Endothelial cell of umbilical vein (primary cell): ENCODE measurements at regions of chr12 and their contacts with region 1.

Region 1: DNA sequence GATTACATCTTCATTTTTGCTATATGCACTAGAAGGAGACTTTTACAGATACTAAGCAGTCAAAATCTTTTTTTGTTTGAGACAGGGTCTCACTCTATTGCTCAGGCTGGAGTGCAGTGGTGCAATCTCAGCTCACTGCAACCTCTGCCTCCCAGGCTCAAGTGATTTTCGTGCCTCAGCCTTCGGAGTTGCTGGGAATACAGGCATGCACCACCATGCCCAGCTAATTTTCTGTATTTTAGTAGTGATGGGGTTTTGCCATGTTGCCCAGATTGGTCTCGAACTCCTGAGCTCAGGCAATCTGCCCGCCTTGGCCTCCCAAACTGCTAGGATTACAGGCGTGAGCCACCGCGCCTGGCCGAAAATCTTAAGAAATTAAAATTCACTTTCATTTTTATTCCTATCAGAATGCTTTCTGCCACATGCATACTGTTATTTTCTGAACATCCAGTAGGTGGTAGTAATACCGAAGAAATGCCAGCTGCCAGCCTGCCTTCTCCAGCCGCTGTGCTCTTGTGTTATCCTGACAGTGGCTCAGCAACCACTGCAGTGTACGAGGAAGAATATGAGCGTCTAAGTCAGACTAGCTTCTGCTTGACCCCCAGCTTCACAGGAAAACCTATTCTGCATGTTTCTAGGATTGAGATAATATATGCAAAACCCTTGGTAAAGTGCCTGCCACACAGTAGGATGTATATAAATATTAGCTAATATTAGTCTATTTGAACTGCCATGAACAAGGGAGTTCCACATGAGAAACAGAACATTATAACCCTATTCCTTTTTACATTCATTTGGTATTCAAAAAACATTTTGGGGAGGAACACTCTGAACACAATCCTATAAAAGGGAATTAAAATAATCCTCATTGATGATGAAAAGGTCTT is 54.2 kb downstream of the RPAP3 start:
- DNase-seq: peak; percentile 66
- H3K4me3 ChIP-seq: no peak overlapping the region
- H3K27ac ChIP-seq: no peak overlapping the region
- H3K4me1 ChIP-seq: no peaks in the 10 kb centered on the region
- H3K27me3 ChIP-seq: no peaks in the 10 kb centered on the region
- CTCF ChIP-seq: peak; percentile 39 to 50
- POLR2A ChIP-seq: no peak

Region 2: GRCh38 chr12:47636908-47637780 is 14.5 kb before region 1 on chr12:
- CTCF ChIA-PET with region 1: interaction called, 19 read pairs
- POLR2A ChIA-PET with region 1: no interaction called
- dilution Hi-C with region 1: no loop called
- intact Hi-C with region 1: no loop called
- DNase-seq: no peak
- H3K4me3 ChIP-seq: no peak overlapping the region
- H3K27ac ChIP-seq: no peak overlapping the region
- H3K4me1 ChIP-seq: no peaks in the 10 kb centered on the region
- H3K27me3 ChIP-seq: no peaks in the 10 kb centered on the region
- CTCF ChIP-seq: peak; percentile 60 to 68
- POLR2A ChIP-seq: no peak

Region 3: DNA sequence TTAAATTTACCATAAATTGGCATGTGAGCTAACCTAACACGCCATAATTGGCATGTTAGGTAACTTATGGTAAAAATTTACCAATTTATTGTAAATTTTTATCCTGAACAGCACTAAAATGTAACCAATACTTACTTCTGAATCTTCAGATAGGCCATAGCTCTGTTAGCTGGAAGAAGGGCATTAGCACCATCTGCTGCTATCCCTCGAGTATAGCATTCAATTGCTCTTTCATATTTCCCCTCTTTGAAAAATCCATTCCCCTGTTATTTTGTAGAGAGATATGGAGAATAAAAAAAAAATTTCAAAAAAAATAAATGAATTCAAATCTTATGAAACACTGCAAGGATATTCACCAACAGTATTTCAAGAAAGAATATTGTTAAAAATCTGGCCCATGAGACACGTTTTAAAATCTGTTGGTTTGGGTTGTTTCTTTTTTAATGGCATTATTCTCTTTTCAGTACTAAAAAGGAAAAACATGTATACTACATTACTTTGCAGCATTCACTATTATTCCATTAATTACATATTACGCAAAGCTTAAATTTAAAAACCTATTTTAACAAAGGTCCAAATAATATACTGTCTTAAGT is 35.1 kb after region 1 on chr12:
- CTCF ChIA-PET with region 1: interaction called, 54 read pairs
- POLR2A ChIA-PET with region 1: no interaction called
- dilution Hi-C with region 1: no loop called
- intact Hi-C with region 1: loop called (anchors 1 kb)
- DNase-seq: peak; percentile 54
- H3K4me3 ChIP-seq: no peak overlapping the region
- H3K27ac ChIP-seq: no peak overlapping the region
- H3K4me1 ChIP-seq: no peaks in the 10 kb centered on the region
- H3K27me3 ChIP-seq: no peaks in the 10 kb centered on the region
- CTCF ChIP-seq: peak; percentile 20 to 61
- POLR2A ChIP-seq: no peak

Region 4: DNA sequence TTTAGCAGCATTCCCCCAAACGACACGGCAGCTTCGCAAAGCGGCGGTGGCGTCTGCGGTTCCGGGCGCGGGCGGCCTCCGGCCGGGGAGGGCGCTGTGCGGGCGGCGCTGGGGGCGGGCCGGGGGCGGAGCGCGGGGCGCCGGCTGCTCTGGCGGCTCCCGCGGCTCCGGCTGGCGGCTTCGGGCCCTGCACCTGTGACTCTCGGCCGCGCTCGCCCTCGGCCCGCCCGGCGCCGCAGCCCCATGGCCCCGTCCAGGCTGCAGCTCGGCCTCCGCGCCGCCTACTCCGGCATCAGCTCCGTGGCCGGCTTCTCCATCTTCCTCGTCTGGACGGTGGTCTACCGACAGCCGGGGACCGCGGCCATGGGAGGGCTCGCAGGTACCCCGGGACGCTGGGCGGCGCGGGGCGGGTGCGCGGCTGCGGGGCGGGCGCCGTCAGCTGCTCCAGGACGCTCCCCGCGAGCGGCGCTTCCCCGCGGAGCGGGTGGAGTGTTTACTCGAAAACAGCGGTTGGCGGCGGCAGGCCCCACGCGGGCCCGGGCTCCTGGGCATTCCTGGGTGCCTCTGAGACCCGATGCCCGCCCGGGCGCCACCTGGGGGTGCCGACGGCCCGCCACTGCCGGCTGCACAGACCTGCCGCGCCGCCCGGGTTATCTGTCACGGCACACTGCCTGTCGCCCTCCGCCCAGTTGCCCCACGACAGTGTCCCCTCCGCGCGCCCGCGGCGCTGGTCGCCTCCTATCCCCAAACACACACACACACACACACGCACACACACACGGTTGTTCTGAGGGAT is 121.6 kb after region 1 on chr12 and contains the start of gene SLC48A1:
- CTCF ChIA-PET with region 1: interaction called, 6 read pairs
- POLR2A ChIA-PET with region 1: no interaction called
- dilution Hi-C with region 1: no loop called
- intact Hi-C with region 1: loop called (anchors 2 kb)
- DNase-seq: peak; percentile 54
- H3K4me3 ChIP-seq: peak within 1 kb of the TSS; percentile 43 to 70 (median 57)
- H3K27ac ChIP-seq: no peak within 1 kb of the TSS
- H3K4me1 ChIP-seq: peaks cover 34% of the 10 kb centered on the region
- H3K27me3 ChIP-seq: no peaks in the 10 kb centered on the region
- CTCF ChIP-seq: peak; percentile 13 to 38
- POLR2A ChIP-seq: peak; percentile 53
- total RNA-seq, gene SLC48A1: 17.9 and 20.3 TPM in 2 replicates

Region 5: DNA sequence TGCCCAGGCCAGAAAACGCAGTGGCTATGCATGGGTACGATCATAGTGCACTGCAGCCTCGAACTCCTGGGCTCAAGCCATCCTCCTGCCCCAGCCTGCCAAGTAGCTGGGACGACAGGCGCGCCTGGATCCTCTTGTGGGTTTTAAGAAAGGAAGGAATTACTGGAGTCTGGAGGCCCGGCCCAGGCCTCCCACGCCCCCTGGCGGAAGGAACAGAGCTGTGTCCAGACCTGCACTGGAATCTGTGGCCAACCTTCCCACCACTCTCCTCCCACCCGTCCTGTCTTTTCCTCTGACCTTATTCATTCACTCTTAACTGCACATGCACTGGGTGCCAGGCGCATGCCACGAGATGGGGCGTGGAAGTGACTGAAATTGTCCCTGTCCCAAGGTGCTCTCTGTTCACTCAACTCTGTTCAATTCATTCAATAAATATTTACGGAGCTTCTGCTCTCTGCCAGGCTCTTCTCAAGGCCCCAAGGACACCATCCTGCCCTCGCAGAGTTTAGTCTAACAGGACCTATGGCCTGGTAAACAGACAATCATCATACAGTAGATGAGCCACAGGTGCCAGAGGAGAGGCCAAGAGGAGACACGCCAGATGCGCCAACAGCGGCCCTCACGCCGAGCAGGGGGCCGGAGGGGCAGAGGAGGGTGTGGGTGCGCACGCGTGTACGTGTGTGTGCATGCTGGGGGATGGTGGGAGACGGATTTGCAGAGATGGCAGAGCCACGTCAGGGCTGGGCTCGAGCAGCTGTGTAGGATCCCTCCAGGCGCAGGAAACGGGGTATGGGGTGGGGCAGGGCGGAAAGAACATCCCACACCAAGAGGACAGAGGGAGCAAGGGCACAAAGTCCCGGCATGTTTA is 298.1 kb after region 1 on chr12:
- CTCF ChIA-PET with region 1: interaction called, 10 read pairs
- POLR2A ChIA-PET with region 1: no interaction called
- dilution Hi-C with region 1: no loop called
- intact Hi-C with region 1: no loop called
- DNase-seq: peak; percentile 66
- H3K4me3 ChIP-seq: no peak overlapping the region
- H3K27ac ChIP-seq: no peak overlapping the region
- H3K4me1 ChIP-seq: no peaks in the 10 kb centered on the region
- H3K27me3 ChIP-seq: peaks cover 0 to 14% of the 10 kb centered on the region in 2 experiments
- CTCF ChIP-seq: peak; percentile 94 to 98
- POLR2A ChIP-seq: no peak